HEK293 (cell line): ENCODE measurements at regions of chr19 and their contacts with region 1.

Region 1: GRCh38 chr19:10717356-10718204 is at the start of gene DNM2:
- H3K4me3 ChIP-seq: peak within 1 kb of the TSS; percentile 97
- H3K27ac ChIP-seq: peak within 1 kb of the TSS; percentile 78
- H3K4me1 ChIP-seq: no peaks in the 10 kb centered on the region
- CTCF ChIP-seq: peak; percentile 92

Region 2: DNA sequence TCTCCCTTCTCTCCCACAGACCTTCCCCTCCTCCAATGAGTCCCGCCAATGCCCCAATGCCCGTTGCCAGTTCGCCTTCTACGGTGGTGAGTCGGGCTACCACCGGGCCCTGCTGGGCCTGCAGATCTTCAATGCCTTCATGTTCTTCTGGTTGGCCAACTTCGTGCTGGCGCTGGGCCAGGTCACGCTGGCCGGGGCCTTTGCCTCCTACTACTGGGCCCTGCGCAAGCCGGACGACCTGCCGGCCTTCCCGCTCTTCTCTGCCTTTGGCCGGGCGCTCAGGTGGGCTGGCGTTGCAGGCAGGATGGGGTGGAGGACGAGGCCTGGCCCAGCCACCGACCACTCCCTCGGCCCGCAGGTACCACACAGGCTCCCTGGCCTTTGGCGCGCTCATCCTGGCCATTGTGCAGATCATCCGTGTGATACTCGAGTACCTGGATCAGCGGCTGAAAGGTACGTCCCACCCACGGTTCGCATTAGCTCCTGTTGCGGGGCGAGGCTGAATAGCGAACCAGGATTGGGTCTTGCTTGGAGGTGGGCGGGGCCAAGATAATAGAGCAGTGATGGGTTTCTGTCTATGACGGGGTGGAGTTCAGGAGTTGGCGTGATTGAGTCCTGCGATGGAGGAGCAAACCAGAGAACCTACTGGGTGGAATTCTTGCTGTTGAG is 81.1 kb before region 1 on chr19:
- CTCF ChIA-PET with region 1: no interaction called
- POLR2A ChIA-PET with region 1: no interaction called
- H3K4me3 ChIP-seq: no peak overlapping the region
- H3K27ac ChIP-seq: no peak overlapping the region
- H3K4me1 ChIP-seq: no peaks in the 10 kb centered on the region
- CTCF ChIP-seq: no peak

Region 3: DNA sequence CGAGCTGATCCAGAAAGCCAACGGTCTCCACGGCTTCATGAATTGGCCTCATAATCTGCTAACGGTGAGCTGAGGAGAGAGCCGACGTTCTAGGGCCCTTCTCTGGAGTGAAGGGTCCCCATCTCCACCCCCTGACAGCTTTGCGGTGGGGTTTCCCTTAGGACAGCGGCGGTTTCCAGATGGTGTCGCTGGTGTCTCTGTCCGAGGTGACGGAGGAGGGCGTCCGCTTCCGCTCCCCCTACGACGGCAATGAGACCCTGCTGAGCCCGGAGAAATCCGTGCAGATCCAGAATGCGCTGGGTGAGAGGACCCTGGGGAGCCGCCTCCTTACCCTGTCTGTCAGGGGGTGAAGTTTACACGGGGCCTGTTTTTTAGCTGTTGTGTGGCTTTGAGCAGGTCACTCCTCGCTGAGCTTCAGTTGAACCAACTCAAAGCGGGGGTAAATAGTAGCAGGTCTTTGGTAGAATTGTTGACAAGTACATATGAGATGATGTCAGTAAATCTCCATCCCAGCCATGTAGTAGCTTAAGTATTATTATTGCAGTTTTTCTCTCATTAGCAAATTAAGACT is 15.5 kb before region 1 on chr19:
- CTCF ChIA-PET with region 1: interaction called, 18 read pairs
- POLR2A ChIA-PET with region 1: interaction called, 14 read pairs
- H3K4me3 ChIP-seq: peak overlapping the region; percentile 89
- H3K27ac ChIP-seq: peak overlapping the region; percentile 42; the same call in 1 of the 2 replicates
- H3K4me1 ChIP-seq: 0 out of 2 replicates have a peak, but pooled peaks cover 3% of the 10 kb centered on the region
- CTCF ChIP-seq: peak; percentile 47

Region 4: DNA sequence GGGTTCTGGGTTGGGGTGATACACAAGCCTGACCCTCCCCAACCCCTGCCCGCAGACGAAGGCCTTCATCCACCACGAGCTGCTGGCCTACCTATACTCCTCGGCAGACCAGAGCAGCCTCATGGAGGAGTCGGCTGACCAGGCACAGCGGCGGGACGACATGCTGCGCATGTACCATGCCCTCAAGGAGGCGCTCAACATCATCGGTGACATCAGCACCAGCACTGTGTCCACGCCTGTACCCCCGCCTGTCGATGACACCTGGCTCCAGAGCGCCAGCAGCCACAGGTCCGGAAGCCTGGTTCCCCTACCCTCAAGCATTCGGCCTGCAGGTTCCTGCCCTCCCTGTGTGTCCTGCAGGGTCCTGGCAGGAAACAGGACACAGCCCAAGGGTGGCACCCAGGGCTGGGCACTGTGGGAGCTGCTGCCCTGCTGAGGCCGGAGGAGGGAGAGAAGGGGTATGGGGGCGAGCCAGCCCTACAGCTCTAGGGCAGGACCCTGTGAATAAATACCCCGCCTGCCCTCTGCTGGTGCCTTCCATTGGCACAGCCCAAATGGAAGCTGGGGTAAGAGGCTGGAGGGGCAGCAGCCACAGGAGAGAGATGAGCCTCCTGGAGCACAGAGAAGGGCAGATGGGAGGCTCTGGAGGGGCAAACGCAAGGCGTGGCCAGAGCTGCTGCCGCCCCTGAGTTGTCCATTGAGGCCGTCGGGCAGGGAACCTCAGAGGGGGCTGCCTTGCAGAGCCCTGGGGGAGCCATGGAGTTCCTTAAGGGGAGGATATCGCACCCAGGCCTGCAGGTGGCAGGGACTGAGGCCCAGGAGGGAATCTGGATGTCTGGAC is 111.6 kb after region 1 on chr19:
- CTCF ChIA-PET with region 1: interaction called, 13 read pairs
- POLR2A ChIA-PET with region 1: interaction called, 39 read pairs
- H3K4me3 ChIP-seq: no peak overlapping the region
- H3K27ac ChIP-seq: no peak overlapping the region
- H3K4me1 ChIP-seq: no peaks in the 10 kb centered on the region
- CTCF ChIP-seq: peak; percentile 8; the same call in 1 of the 2 replicates